ENCODE measurements at regions of chr1 and their contacts with region 1.

Region 1: DNA sequence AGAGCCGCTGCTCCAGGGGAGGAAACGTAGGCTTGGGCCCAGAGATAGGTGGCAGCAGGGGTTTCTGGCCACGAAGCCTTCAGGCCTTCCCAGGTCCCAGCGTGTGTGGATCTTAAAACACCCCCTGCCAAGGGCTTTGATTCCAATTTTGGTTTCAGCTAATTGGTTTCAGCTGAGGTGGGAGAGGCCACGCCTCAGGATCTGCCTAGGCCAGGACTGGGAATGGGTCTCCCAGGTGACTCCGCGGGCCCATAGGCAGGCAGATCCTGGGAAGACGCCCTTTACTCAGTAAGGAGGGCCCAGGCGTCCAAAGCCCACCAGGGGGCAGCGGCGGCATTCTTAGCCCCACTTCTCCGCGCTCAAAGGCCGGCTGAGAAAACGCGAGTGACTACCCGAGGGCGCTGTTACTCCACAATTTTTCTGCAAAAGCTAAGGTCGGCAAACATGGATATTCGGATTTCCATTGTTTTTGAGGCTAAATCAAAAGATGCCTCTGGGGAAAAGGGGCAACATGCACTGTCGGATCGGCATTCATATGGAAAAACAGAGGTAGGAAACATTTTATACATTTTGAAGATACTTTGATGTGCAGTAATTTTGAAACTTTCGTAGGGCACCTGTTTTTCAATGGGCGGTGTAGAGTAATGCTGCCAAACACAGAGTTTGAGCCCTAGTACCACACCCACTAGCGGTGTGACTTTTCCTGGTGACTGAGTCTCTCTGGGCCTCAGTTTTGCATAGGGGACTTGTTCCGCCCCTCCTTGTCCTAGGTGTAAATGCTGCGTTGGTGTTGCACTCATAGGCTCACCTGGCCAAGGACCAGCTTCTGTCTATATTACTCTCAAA is 31.8 kb upstream of the BCL10 start:
- DNase-seq: peak; percentile 91
- H3K4me3 ChIP-seq: no peak overlapping the region
- H3K27ac ChIP-seq: peak overlapping the region; percentile 44
- H3K4me1 ChIP-seq: peaks cover 21% of the 10 kb centered on the region
- H3K27me3 ChIP-seq: no peaks in the 10 kb centered on the region
- CTCF ChIP-seq: peak; percentile 99
- POLR2A ChIP-seq: no peak

Region 2: GRCh38 chr1:85276215-85276977 is 31.8 kb before region 1 on chr1 and contains the start of gene BCL10:
- CTCF ChIA-PET with region 1: interaction called, 10 read pairs
- POLR2A ChIA-PET with region 1: no interaction called
- dilution Hi-C with region 1: no loop called
- intact Hi-C with region 1: no loop called
- DNase-seq: peak; percentile 99
- H3K4me3 ChIP-seq: peak within 1 kb of the TSS; percentile 95 to 99 (median 98)
- H3K27ac ChIP-seq: peak within 1 kb of the TSS; percentile 100
- H3K4me1 ChIP-seq: peaks cover 56% of the 10 kb centered on the region
- H3K27me3 ChIP-seq: no peaks in the 10 kb centered on the region
- CTCF ChIP-seq: no peak
- POLR2A ChIP-seq: peak; percentile 64
- total RNA-seq, gene BCL10: 74.5 and 78.6 TPM in 2 replicates

Region 3: DNA sequence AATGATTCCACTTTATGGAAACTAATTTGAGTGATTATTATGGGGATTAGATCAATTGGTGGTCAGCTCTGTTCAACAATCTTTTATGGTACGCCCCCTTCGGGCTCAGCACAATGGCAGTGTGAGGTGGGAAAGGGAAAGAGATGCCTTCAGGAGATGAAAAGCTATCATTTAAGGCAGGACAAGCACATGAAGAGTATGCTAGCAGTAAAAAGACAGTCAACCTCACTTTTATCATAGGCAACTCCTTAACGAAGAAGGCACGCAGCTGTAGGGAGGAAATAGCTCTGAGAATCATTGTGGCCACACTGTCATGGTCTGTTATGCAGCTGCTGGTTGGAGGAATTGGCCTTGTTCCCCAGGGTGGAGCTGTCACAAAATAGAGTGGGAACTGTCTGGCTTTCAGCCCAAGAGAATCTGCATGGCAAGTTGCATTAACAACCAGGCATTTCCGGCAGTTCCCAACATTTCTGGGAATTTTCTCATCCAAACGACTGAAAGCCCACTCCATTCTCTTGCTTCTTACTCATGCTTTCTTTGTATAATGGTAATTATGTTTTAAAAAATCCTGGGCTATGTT is 22.6 kb after region 1 on chr1:
- CTCF ChIA-PET with region 1: interaction called, 18 read pairs
- POLR2A ChIA-PET with region 1: interaction called, 4 read pairs
- dilution Hi-C with region 1: no loop called
- intact Hi-C with region 1: loop called (anchors 1 kb)
- DNase-seq: peak; percentile 95
- H3K4me3 ChIP-seq: no peak overlapping the region
- H3K27ac ChIP-seq: peak overlapping the region; percentile 98
- H3K4me1 ChIP-seq: peaks cover 89% of the 10 kb centered on the region
- H3K27me3 ChIP-seq: no peaks in the 10 kb centered on the region
- CTCF ChIP-seq: no peak
- POLR2A ChIP-seq: peak; percentile 68

Region 4: GRCh38 chr1:85398391-85399064 is 90.3 kb after region 1 on chr1:
- CTCF ChIA-PET with region 1: interaction called, 22 read pairs
- POLR2A ChIA-PET with region 1: no interaction called
- dilution Hi-C with region 1: no loop called
- intact Hi-C with region 1: loop called (anchors 1 kb)
- DNase-seq: peak; percentile 49
- H3K4me3 ChIP-seq: no peak overlapping the region
- H3K27ac ChIP-seq: no peak overlapping the region
- H3K4me1 ChIP-seq: peaks cover 6% of the 10 kb centered on the region
- H3K27me3 ChIP-seq: no peaks in the 10 kb centered on the region
- CTCF ChIP-seq: peak in 1 of 2 donors; percentile 29
- POLR2A ChIP-seq: no peak

Region 5: GRCh38 chr1:85464497-85465098 is 156.4 kb after region 1 on chr1:
- CTCF ChIA-PET with region 1: interaction called, 48 read pairs
- POLR2A ChIA-PET with region 1: interaction called, 5 read pairs
- dilution Hi-C with region 1: no loop called
- intact Hi-C with region 1: loop called (anchors 1 kb)
- DNase-seq: peak; percentile 90
- H3K4me3 ChIP-seq: peak overlapping the region; percentile 65 to 97 (median 91)
- H3K27ac ChIP-seq: peak overlapping the region; percentile 90
- H3K4me1 ChIP-seq: peaks cover 39% of the 10 kb centered on the region
- H3K27me3 ChIP-seq: no peaks in the 10 kb centered on the region
- CTCF ChIP-seq: no peak
- POLR2A ChIP-seq: peak; percentile 92

Region 6: DNA sequence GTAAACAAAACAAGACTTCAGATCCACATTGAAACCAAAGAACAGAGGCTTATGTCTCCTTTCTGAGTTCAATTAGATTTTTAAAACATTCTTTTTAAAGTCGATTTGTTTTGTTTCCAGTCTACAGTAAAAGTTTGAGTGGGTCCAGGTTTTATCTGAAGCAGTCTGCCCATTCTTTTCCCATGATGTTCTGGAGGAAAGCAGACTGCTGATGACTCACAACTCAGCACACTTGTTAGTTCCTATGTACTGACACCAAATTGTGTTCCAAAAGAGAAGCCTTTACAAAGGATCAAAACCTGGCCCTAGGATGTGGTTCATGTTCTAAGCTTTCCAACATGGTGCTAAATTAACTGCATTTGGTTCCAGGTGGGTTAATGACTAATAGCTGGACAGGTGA is 260.9 kb after region 1 on chr1:
- CTCF ChIA-PET with region 1: interaction called, 23 read pairs
- POLR2A ChIA-PET with region 1: no interaction called
- dilution Hi-C with region 1: no loop called
- intact Hi-C with region 1: no loop called
- DNase-seq: peak; percentile 83
- H3K4me3 ChIP-seq: no peak overlapping the region
- H3K27ac ChIP-seq: peak overlapping the region; percentile 71
- H3K4me1 ChIP-seq: peaks cover 69% of the 10 kb centered on the region
- H3K27me3 ChIP-seq: no peaks in the 10 kb centered on the region
- CTCF ChIP-seq: no peak
- POLR2A ChIP-seq: no peak

Region 7: GRCh38 chr1:85692730-85693314 is 384.6 kb after region 1 on chr1:
- CTCF ChIA-PET with region 1: interaction called, 78 read pairs
- POLR2A ChIA-PET with region 1: no interaction called
- dilution Hi-C with region 1: loop called (anchors 25 kb)
- intact Hi-C with region 1: loop called (anchors 1 kb)
- DNase-seq: peak; percentile 60
- H3K4me3 ChIP-seq: no peak overlapping the region
- H3K27ac ChIP-seq: peak overlapping the region; percentile 38
- H3K4me1 ChIP-seq: peaks cover 7% of the 10 kb centered on the region
- H3K27me3 ChIP-seq: no peaks in the 10 kb centered on the region
- CTCF ChIP-seq: peak; percentile 22 to 26
- POLR2A ChIP-seq: no peak

Measured in endothelial cell of umbilical vein (primary cell).